ENCODE measurements at regions of chr1 and their contacts with region 1.

Region 1: DNA sequence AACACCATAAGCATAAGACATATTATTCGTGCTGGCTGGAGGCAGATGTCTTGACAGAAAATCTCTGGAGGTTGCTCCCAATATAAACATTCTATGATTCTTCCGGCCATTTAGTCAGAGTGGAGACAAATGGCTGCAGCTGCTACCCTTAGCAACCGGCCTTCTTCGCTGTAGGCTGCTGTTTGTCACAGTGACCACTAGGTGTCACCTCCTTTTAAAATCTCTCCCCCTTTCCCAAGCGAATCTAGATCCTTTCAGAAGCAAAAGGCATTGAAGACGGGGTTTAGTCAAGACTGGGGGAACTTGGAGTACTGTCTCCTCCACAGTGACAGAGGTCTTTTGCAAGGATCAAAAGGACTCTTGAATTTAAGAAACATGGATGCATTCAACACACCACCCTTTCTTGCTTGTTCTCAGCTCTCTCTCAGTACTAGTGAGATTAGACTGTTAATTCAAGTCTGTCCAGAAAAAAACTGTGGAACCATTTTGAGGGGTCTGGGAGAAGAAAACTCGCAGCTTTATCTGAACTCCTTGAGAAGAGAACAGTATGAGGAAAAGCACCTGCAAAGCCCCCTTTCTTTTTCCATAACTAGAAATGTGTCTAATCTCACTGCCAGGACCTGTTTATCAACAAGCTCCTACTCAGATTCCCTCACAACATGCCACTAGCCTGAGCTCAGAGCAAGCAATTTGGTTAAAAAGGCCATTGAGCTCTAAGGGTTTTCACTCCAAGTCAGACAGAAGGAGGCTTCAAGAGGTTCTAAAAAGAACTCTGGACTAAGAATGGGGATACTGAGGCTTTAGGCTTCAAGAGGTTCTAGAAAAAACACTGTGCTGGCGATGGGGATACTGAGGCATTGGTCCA is 408.3 kb upstream of the PLXNA2 start:
- DNase-seq: peak; percentile 55 to 60
- H3K4me3 ChIP-seq: no peak overlapping the region
- H3K4me3 Mint-ChIP-seq: no peak overlapping the region
- H3K27ac Mint-ChIP-seq: no peak overlapping the region
- H3K4me1 ChIP-seq: no peaks in the 10 kb centered on the region
- H3K4me1 Mint-ChIP-seq: no peaks in the 10 kb centered on the region
- H3K27me3 ChIP-seq: no peaks in the 10 kb centered on the region
- H3K27me3 Mint-ChIP-seq: peaks cover 13% of the 10 kb centered on the region
- CTCF ChIP-seq: peak; percentile 84 to 87

Region 2: DNA sequence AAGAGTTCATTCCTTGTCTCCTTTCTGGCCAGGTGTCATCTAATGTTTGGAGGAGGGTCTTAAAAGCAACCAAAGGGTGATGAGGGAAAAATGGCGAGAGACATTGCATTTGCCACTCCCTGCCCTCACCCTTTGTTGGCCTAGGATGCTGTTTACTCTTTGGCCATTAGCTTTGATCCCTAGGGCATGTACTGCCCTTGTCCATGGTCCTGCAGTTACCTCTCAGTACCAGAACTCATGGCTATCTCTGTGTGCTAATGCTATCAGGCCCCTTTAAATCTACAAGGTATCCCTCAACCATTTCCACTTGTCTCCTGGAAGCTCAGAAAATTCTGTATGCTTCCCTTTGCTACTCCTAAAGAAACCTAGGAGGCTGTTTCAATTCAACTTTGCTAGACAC is 16.5 kb after region 1 on chr1:
- CTCF ChIA-PET with region 1: no interaction called
- POLR2A ChIA-PET with region 1: no interaction called
- intact Hi-C with region 1: no loop called
- DNase-seq: peak in 1 of 2 experiments; percentile 12
- H3K4me3 ChIP-seq: no peak overlapping the region
- H3K4me3 Mint-ChIP-seq: no peak overlapping the region
- H3K27ac Mint-ChIP-seq: no peak overlapping the region
- H3K4me1 ChIP-seq: no peaks in the 10 kb centered on the region
- H3K4me1 Mint-ChIP-seq: no peaks in the 10 kb centered on the region
- H3K27me3 ChIP-seq: no peaks in the 10 kb centered on the region
- H3K27me3 Mint-ChIP-seq: peaks cover 11% of the 10 kb centered on the region
- CTCF ChIP-seq: no peak

Region 3: DNA sequence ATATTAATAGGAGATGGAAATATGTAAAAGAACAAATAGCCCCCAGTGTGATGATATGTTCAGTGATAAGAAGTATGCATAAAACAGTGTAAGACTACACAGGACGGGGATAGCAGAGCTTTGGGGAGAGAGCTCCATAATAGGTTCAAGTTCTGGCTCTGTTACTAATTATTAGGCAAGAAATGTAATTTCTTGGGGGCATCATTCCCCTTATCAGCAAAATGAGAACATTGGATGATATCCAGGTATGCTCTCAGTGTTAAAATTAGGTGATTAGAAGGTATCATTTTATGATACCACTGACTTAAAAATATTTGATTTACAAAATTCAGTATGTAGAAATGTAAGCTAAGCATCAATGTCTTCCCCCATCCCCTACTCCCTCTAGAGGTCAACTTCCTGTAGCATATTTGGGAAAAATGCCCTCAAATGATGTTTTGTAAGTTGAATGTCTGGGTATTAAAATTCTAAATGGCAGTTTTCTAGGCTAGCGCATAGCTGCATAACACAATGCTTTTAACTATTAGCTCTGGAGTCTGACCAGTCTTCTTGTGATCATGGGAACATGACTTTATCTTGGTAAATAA is 345.3 kb after region 1 on chr1:
- CTCF ChIA-PET with region 1: no interaction called
- POLR2A ChIA-PET with region 1: no interaction called
- intact Hi-C with region 1: loop called (anchors 5 kb)
- DNase-seq: peak in 1 of 2 experiments; percentile 4
- H3K4me3 ChIP-seq: no peak overlapping the region
- H3K4me3 Mint-ChIP-seq: no peak overlapping the region
- H3K27ac Mint-ChIP-seq: no peak overlapping the region
- H3K4me1 ChIP-seq: no peaks in the 10 kb centered on the region
- H3K4me1 Mint-ChIP-seq: no peaks in the 10 kb centered on the region
- H3K27me3 ChIP-seq: no peaks in the 10 kb centered on the region
- H3K27me3 Mint-ChIP-seq: peaks cover 16% of the 10 kb centered on the region
- CTCF ChIP-seq: peak; percentile 17 to 61

Region 4: DNA sequence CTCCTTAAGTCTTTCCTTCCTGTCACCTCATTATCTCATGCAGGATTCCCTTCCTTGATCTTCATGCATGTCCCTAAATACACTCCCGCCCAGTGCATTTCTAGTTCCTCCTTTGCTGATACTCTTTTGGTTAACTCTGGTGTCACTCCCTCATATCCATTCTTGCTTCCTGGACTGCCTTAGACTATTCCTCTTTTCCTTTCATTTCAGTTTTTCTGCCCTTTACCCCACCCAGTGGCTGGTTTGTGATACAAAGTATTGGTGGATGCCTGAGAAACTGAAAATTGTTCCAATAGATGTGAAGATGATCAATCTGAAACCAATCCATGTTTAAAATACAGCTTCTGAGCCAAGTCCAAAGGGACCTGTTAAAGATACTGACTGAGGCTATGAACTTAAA is 377.2 kb after region 1 on chr1:
- CTCF ChIA-PET with region 1: no interaction called
- POLR2A ChIA-PET with region 1: no interaction called
- intact Hi-C with region 1: loop called (anchors 10 kb)
- DNase-seq: no peak
- H3K4me3 ChIP-seq: no peak overlapping the region
- H3K4me3 Mint-ChIP-seq: no peak overlapping the region
- H3K27ac Mint-ChIP-seq: no peak overlapping the region
- H3K4me1 ChIP-seq: no peaks in the 10 kb centered on the region
- H3K4me1 Mint-ChIP-seq: no peaks in the 10 kb centered on the region
- H3K27me3 ChIP-seq: no peaks in the 10 kb centered on the region
- H3K27me3 Mint-ChIP-seq: peaks cover 10% of the 10 kb centered on the region
- CTCF ChIP-seq: peak in 1 of 2 experiments; percentile 11

Region 5: GRCh38 chr1:209190591-209191261 is 538.2 kb after region 1 on chr1:
- CTCF ChIA-PET with region 1: no interaction called
- POLR2A ChIA-PET with region 1: no interaction called
- intact Hi-C with region 1: loop called (anchors 5 kb)
- DNase-seq: peak; percentile 60 to 66
- H3K4me3 ChIP-seq: no peak overlapping the region
- H3K4me3 Mint-ChIP-seq: no peak overlapping the region
- H3K27ac Mint-ChIP-seq: no peak overlapping the region
- H3K4me1 ChIP-seq: 0 out of 2 replicates have a peak, but pooled peaks cover 3% of the 10 kb centered on the region
- H3K4me1 Mint-ChIP-seq: no peaks in the 10 kb centered on the region
- H3K27me3 ChIP-seq: no peaks in the 10 kb centered on the region
- H3K27me3 Mint-ChIP-seq: no peaks in the 10 kb centered on the region
- CTCF ChIP-seq: peak; percentile 71 to 74

Region 6: DNA sequence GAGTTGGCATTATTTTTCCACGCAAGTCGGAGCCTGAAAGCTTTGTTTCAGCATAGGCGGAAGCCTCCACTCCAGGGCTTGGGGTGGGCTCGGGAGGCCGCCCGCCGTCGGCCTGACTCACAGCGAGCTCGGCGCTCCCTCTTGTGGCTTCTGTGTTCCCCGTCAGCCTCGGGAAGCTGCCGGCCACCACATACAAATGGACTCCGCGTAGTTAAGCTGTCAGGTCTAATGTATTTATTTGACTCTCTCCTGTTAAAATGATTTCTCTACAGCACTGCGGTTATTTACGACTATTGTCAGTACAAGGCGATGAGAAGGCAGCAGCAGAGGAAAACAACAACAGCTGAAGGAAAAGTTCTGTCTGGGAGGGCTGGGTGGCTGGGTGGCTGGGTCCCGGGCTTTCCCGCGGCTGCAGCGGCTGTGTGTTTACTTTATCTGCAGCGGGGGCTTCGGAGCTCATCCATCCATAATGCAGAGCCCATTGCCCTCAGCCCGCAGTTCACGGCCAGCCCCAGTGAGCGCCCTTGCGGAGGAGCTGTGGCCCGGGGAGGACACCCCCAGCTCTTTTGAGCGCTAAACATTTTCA is 555.3 kb after region 1 on chr1:
- CTCF ChIA-PET with region 1: interaction called, 6 read pairs
- POLR2A ChIA-PET with region 1: no interaction called
- intact Hi-C with region 1: loop called (anchors 1 kb)
- DNase-seq: peak; percentile 59 to 66
- H3K4me3 ChIP-seq: peak overlapping the region; percentile 10; the same call in 1 of the 2 replicates
- H3K4me3 Mint-ChIP-seq: peak overlapping the region; percentile 62
- H3K27ac Mint-ChIP-seq: no peak overlapping the region
- H3K4me1 ChIP-seq: no peaks in the 10 kb centered on the region
- H3K4me1 Mint-ChIP-seq: no peaks in the 10 kb centered on the region
- H3K27me3 ChIP-seq: peaks cover 1% of the 10 kb centered on the region
- H3K27me3 Mint-ChIP-seq: peaks cover 14% of the 10 kb centered on the region
- CTCF ChIP-seq: peak; percentile 55 to 91

Region 7: GRCh38 chr1:209248649-209249279 is 596.2 kb after region 1 on chr1:
- CTCF ChIA-PET with region 1: no interaction called
- POLR2A ChIA-PET with region 1: no interaction called
- intact Hi-C with region 1: loop called (anchors 1 kb)
- DNase-seq: peak; percentile 67 to 71
- H3K4me3 ChIP-seq: no peak overlapping the region
- H3K4me3 Mint-ChIP-seq: no peak overlapping the region
- H3K27ac Mint-ChIP-seq: no peak overlapping the region
- H3K4me1 ChIP-seq: no peaks in the 10 kb centered on the region
- H3K4me1 Mint-ChIP-seq: no peaks in the 10 kb centered on the region
- H3K27me3 ChIP-seq: no peaks in the 10 kb centered on the region
- H3K27me3 Mint-ChIP-seq: peaks cover 3% of the 10 kb centered on the region
- CTCF ChIP-seq: peak; percentile 88

Region 8: GRCh38 chr1:209513226-209513625 is 860.7 kb after region 1 on chr1:
- CTCF ChIA-PET with region 1: no interaction called
- POLR2A ChIA-PET with region 1: no interaction called
- intact Hi-C with region 1: loop called (anchors 10 kb)
- DNase-seq: peak; percentile 35 to 38
- H3K4me3 ChIP-seq: no peak overlapping the region
- H3K4me3 Mint-ChIP-seq: no peak overlapping the region
- H3K27ac Mint-ChIP-seq: no peak overlapping the region
- H3K4me1 ChIP-seq: no peaks in the 10 kb centered on the region
- H3K4me1 Mint-ChIP-seq: no peaks in the 10 kb centered on the region
- H3K27me3 ChIP-seq: no peaks in the 10 kb centered on the region
- H3K27me3 Mint-ChIP-seq: peaks cover 9% of the 10 kb centered on the region
- CTCF ChIP-seq: peak; percentile 59 to 64

Measured in Caco-2 (cell line).